ENCODE measurements at regions of chr17 and their contacts with region 1.

Region 1: DNA sequence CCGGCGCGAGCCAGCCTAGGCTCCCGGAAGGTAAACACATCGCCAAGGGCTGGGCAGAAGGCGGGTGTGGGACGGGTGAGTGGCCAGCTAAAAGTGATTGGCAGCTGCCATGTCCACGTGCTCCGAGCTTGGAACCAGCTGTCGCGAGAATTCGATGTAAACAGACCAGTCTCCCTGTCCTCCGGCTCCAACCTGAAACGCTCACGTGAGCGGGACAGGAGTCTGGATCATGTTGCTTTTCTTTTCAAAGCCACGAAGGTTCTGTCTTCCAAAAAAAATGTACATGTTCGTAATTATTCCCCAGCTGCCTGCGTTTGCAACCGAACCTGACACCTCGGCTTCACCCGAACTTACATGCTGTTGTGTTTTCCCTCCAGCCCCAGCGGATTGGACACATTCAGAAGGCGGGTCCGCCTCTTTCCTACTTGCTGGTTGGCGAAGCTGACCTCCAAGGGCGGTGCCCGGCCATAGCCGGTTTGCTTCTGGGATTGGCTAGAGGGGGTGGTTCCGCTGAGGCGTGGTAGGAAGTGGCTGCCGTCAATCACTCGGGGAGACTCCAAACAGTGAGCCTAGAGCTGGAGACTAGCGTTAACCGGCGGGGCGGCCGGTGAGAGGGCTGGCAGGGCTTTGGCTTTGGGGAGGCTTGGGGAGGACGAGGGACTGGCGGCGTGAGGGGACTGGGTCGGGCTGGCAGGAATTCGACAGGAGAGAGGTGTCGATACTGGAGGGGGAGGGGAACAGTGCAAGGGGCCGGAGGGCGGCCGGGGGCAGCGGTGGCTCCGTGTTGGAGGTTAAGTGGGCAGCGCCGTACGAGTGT is at the start of gene BCAS3:
- DNase-seq: peak; percentile 99
- H3K4me3 Mint-ChIP-seq: peak within 1 kb of the TSS; percentile 100
- H3K27ac Mint-ChIP-seq: peak within 1 kb of the TSS; percentile 74
- H3K4me1 Mint-ChIP-seq: peaks cover 19% of the 10 kb centered on the region
- H3K27me3 Mint-ChIP-seq: no peaks in the 10 kb centered on the region
- total RNA-seq, gene BCAS3: 9.5 and 10.2 TPM in 2 replicates

Region 2: DNA sequence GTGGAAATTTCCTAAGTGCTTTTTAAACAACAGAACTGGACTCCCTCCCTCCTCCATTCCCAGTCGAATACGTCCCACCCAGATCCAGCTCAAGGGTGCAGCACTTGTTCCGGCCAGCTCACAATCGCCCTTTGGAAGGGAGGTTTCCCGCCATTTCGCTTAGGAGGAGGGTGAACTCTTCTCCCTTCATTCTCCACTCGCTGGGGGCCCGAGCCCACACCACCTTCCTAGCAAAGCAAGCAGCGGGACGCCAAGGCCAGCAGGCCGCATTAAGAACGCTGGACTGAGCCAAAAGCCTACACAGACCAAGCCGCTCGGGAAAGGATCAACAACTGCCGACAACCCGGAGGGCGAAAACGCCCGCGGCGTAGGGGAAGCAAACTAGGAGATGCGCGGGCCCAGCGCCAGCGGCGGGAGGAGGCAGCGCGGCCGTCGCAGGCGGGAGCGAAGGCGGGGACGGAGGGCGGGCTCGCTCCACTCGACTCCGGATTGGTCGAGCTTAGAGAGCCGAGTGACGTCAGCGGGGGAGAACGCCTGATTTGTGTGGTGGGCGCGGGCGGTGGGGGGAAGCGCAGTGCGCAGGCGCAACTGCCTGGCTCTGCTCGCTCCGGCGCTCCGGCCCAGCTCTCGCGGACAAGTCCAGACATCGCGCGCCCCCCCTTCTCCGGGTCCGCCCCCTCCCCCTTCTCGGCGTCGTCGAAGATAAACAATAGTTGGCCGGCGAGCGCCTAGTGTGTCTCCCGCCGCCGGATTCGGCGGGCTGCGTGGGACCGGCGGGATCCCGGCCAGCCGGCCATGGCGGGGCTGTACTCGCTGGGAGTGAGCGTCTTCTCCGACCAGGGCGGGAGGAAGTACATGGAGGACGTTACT is 77.7 kb before region 1 on chr17 and contains the start of gene PPM1D:
- intact Hi-C with region 1: loop called (anchors 1 kb)
- DNase-seq: peak; percentile 99
- H3K4me3 Mint-ChIP-seq: peak within 1 kb of the TSS; percentile 95
- H3K27ac Mint-ChIP-seq: peak within 1 kb of the TSS; percentile 98
- H3K4me1 Mint-ChIP-seq: peaks cover 37% of the 10 kb centered on the region
- H3K27me3 Mint-ChIP-seq: no peaks in the 10 kb centered on the region
- total RNA-seq, gene PPM1D: 17.1 and 17.9 TPM in 2 replicates

Region 3: DNA sequence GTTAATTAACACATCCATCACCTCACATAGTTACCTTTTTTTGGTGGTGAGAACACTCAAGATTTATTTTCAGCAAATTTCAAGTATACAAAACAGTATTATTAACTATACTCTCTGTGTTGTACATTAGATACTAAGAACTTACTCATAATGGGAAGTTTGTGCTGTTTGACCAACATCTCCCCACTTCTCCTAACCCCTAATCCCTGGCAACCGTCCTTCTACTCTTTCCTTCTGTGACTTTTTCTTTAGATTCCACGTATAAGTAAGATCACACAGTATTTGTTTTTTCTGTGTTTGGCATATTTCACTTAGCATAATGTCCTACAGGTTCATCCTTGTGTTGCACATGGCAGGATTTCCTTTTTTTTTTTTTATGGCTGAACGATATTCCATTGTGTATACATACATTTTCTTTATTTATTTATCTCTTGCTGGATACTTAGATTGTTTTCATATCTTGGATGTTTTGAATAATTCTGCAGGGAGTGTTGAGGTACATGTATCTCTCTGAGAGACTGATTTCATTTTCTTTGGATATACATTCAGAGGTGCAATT is 58.6 kb before region 1 on chr17:
- intact Hi-C with region 1: no loop called
- DNase-seq: no peak
- H3K4me3 Mint-ChIP-seq: no peak overlapping the region
- H3K27ac Mint-ChIP-seq: no peak overlapping the region
- H3K4me1 Mint-ChIP-seq: peaks cover 12% of the 10 kb centered on the region
- H3K27me3 Mint-ChIP-seq: no peaks in the 10 kb centered on the region